CD14-positive monocyte (primary cell): ENCODE measurements at regions of chr16 and their contacts with region 1.

Region 1: GRCh38 chr16:86563489-86564345 is 2.9 kb upstream of the FOXC2 start:
- DNase-seq: peak; percentile 76 to 88 (median 82)
- H3K4me3 ChIP-seq: peak overlapping the region in 1 of 3 experiments; percentile 52
- H3K4me3 Mint-ChIP-seq: peak overlapping the region in 1 of 2 donors; percentile 85
- H3K27ac ChIP-seq: no peak overlapping the region
- H3K27ac Mint-ChIP-seq: no peak overlapping the region
- H3K4me1 ChIP-seq: peaks cover 4 to 9% of the 10 kb centered on the region in 2 donors
- H3K4me1 Mint-ChIP-seq: peaks cover 22% of the 10 kb centered on the region
- H3K27me3 ChIP-seq: peaks cover 30 to 48% of the 10 kb centered on the region in 2 donors
- H3K27me3 Mint-ChIP-seq: peaks cover 56 to 70% (median 65%) of the 10 kb centered on the region in 3 donors
- CTCF ChIP-seq: peak; percentile 99

Region 2: GRCh38 chr16:86578611-86579267 is 15.0 kb after region 1 on chr16:
- intact Hi-C with region 1: no loop called
- DNase-seq: no peak
- H3K4me3 ChIP-seq: no peak overlapping the region
- H3K4me3 Mint-ChIP-seq: peak overlapping the region in 1 of 2 donors; percentile 77
- H3K27ac ChIP-seq: no peak overlapping the region
- H3K27ac Mint-ChIP-seq: no peak overlapping the region
- H3K4me1 ChIP-seq: peaks cover 12 to 17% of the 10 kb centered on the region in 2 donors
- H3K4me1 Mint-ChIP-seq: peaks cover 13% of the 10 kb centered on the region
- H3K27me3 ChIP-seq: peaks cover 36 to 76% of the 10 kb centered on the region in 2 donors
- H3K27me3 Mint-ChIP-seq: peaks cover 74 to 83% (median 78%) of the 10 kb centered on the region in 3 donors
- CTCF ChIP-seq: no peak

Region 3: DNA sequence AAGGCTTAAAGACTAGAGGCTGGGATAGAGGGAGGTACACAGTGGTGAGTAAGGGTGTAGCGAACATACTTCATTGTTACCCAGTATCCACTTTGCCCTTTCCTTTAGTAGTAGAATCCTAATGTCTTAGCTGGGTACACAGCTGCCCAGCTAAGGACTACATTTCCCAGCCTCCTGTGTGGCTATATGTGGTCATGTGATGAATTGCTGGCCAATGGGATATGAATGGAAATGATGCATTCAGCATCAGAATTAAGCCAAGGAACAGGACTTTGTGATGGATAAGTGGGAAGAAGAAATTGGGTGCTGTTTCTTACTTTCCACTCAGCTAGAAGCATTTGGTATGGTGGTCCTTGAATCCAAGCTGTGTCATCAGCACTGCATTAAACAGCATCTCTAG is 70.6 kb after region 1 on chr16:
- intact Hi-C with region 1: no loop called
- DNase-seq: no peak
- H3K4me3 ChIP-seq: no peak overlapping the region
- H3K4me3 Mint-ChIP-seq: no peak overlapping the region
- H3K27ac ChIP-seq: no peak overlapping the region
- H3K27ac Mint-ChIP-seq: no peak overlapping the region
- H3K4me1 ChIP-seq: no peaks in the 10 kb centered on the region
- H3K4me1 Mint-ChIP-seq: peaks cover 3% of the 10 kb centered on the region
- H3K27me3 ChIP-seq: no peaks in the 10 kb centered on the region
- H3K27me3 Mint-ChIP-seq: peaks cover 3 to 9% (median 9%) of the 10 kb centered on the region in 3 donors
- CTCF ChIP-seq: no peak

Region 4: DNA sequence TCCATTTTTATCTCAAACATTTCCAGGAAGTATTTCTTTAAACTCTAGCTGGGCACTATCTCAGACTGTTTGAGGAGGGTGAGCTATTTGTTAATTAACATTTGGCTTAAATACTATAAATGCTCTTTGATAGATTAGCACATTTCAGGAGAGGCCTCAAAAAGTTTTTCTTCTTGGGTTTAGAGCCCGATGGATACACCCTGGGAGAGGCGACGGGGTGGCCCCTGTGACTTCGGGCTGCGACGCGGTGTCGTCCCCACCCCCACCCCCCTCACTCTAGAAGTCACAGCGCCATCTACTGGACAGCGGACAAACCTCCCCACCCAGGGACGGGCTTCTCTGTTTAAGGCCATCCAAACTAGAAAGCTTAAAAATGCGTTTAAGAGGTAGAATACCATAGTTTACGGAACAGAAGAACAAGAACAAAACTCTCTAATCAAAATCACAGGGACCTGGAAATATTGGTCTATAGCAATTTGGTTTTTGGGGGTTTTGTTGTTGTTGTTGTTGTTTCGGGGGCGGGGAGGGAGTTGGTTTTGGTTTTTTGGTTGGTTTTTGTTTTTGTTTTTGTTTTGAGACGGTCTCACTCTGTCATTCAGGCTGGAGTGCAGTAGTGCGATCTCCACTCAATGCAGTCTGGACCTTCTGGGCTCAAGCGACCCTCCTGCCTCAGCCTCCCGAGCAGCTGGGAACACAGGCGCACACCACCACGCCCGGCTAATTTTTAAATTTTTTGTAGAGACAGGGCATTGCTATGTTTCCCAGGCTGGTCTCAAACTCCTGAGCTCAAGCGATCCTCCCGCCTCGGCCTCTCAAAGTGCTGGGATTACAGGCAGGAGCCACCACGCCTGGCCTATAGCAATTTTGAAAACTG is 499.1 kb after region 1 on chr16:
- intact Hi-C with region 1: loop called in 1 of 2 experiments (anchors 5 kb)
- DNase-seq: peak; percentile 55 to 65 (median 56)
- H3K4me3 ChIP-seq: peak overlapping the region in 1 of 3 experiments; percentile 46
- H3K4me3 Mint-ChIP-seq: peak overlapping the region; percentile 55 to 71
- H3K27ac ChIP-seq: no peak overlapping the region
- H3K27ac Mint-ChIP-seq: no peak overlapping the region
- H3K4me1 ChIP-seq: peaks cover 33 to 46% of the 10 kb centered on the region in 2 donors
- H3K4me1 Mint-ChIP-seq: peaks cover 45% of the 10 kb centered on the region
- H3K27me3 ChIP-seq: no peaks in the 10 kb centered on the region
- H3K27me3 Mint-ChIP-seq: peaks cover 0 to 11% (median 1%) of the 10 kb centered on the region in 3 donors
- CTCF ChIP-seq: peak; percentile 85

Region 5: DNA sequence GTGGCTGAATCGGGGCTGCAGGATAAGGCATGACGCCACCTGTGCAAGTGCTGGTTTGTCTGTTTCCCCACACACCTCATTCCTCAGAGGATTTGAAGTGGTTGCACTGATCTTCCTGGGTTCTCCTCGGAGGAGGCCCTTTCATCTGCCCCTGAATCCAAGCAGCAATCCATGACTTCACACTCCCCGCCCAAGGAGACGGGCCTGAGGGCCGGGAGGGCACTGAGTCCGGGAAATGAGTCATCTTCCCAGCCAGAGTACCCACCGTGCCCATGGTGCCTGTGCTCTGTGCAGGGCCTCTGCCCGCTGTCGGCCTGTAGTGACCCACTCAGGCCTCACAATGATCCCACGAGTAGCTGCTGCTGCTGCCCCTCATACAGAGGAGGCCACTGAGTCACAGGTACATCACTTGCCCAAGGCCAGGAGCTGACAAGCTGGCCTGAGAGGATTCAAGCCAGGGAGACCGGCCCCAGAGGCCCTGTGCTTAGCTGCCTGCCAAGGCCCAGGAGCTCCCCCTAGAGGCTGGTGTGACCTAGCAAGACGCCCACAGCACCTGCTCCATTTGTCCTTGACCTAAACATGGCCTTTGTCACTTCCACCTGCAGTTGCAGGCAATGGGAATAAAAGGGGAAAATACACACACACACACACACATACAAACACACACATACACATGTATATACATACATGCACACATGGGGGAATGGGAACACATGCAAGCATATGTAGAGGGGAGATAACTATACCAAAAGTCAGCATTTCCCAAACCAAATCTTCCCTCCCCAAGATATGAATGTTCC is 513.4 kb after region 1 on chr16:
- intact Hi-C with region 1: loop called (anchors 5 kb)
- DNase-seq: peak; percentile 46 to 55 (median 50)
- H3K4me3 ChIP-seq: no peak overlapping the region
- H3K4me3 Mint-ChIP-seq: no peak overlapping the region
- H3K27ac ChIP-seq: no peak overlapping the region
- H3K27ac Mint-ChIP-seq: no peak overlapping the region
- H3K4me1 ChIP-seq: no peaks in the 10 kb centered on the region
- H3K4me1 Mint-ChIP-seq: peaks cover 2% of the 10 kb centered on the region
- H3K27me3 ChIP-seq: no peaks in the 10 kb centered on the region
- H3K27me3 Mint-ChIP-seq: peaks cover 2 to 15% (median 5%) of the 10 kb centered on the region in 3 donors
- CTCF ChIP-seq: peak; percentile 88

Region 6: GRCh38 chr16:87278191-87279095 is 714.7 kb after region 1 on chr16:
- intact Hi-C with region 1: loop called (anchors 5 kb)
- DNase-seq: peak in 2 of 3 donors; percentile 4 to 24
- H3K4me3 ChIP-seq: no peak overlapping the region
- H3K4me3 Mint-ChIP-seq: no peak overlapping the region
- H3K27ac ChIP-seq: no peak overlapping the region
- H3K27ac Mint-ChIP-seq: peak overlapping the region in 1 of 7 donors; percentile 11
- H3K4me1 ChIP-seq: no peaks in the 10 kb centered on the region
- H3K4me1 Mint-ChIP-seq: peaks cover 4% of the 10 kb centered on the region
- H3K27me3 ChIP-seq: no peaks in the 10 kb centered on the region
- H3K27me3 Mint-ChIP-seq: peaks cover 7 to 21% (median 15%) of the 10 kb centered on the region in 3 donors
- CTCF ChIP-seq: peak; percentile 62